ENCODE measurements at regions of chr4 and their contacts with region 1.

Region 1: DNA sequence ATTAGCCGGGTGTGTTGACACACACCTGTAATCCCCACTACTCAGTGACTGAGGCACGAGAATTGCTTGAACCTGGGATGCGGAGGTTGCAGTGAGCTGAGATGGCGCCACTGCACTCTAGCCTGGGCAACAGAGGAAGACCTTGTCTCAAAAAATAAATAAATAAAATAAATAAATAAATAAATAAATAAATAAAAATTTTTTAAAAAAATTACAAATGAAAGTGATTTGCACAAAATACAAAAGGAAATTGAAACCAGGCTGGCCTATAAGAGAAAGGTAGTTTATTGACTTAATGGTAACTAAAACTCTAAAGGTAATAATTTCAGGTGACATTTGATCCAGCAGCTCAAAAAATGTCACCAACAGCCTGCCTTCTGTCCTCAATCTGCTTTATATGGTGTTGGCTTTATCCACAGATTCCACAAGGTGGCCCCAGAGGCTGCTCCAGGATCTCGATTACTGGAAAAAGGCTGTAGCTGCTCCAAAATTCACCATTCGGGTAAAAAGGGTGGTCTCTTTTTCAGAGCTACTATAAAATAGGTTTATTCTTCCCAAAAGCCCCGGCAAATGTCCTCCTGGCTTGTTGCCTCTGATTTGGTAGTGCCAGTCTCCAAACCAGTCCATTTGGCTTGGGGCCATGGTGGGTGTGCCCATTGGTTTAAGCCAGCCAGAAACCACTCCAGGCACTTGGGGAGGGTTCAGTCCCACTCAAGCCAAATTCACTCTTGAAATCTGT is 61.4 kb upstream of the TRIM2 start:
- DNase-seq: peak; percentile 52 to 62
- H3K4me3 ChIP-seq: peak overlapping the region; percentile 29; the same call in 1 of the 2 replicates
- H3K27ac ChIP-seq: peak overlapping the region; percentile 82
- H3K4me1 ChIP-seq: peaks cover 31% of the 10 kb centered on the region
- H3K27me3 ChIP-seq: no peaks in the 10 kb centered on the region
- CTCF ChIP-seq: peak; percentile 82

Region 2: GRCh38 chr4:153189016-153189801 is 46.3 kb after region 1 on chr4:
- CTCF ChIA-PET with region 1: interaction called, 11 read pairs
- POLR2A ChIA-PET with region 1: no interaction called
- intact Hi-C with region 1: no loop called
- DNase-seq: no peak
- H3K4me3 ChIP-seq: no peak overlapping the region
- H3K27ac ChIP-seq: no peak overlapping the region
- H3K4me1 ChIP-seq: no peaks in the 10 kb centered on the region
- H3K27me3 ChIP-seq: no peaks in the 10 kb centered on the region
- CTCF ChIP-seq: no peak

Region 3: DNA sequence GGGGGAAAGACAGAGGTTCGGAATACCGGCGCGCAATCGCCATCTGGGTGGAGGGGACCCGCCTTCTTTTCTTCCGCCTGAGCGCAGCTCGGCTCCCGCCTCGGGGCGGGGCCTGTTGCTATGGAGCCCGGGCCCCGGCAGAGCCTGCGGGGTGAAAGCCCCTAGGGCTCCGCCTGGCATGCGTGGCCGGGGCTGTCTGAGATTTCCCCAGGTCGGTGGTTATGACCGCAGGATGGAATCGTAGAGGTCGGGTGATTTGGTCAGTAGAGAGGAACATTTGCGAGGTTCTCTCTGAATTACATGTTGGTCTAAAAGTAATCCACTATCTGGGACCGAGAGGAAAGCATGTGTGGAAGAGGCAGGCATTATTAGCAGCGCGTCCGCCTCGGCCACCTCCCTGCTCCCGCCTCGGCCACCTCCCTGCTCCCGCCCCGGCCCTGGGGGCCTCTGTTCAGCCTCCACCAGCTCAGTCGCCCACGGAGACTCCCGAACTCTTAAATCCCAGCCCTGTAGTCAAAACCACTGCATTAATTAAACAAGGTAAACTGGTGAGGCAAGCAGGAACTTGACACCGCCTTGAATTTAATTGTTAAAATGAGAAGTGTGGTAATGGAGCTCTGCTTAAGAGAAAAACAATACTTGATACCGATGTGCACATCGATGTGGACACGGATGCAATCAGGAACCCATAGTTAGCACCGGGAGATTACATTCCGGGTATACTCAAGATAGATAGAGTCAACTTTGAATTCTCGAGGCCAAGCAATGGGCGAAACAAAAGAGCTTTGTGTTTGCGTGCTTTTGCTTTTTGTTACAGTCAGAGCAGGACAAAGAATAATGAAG is 106.6 kb after region 1 on chr4:
- CTCF ChIA-PET with region 1: interaction called, 3 read pairs
- POLR2A ChIA-PET with region 1: interaction called, 3 read pairs
- intact Hi-C with region 1: loop called (anchors 1 kb)
- DNase-seq: peak; percentile 79 to 89
- H3K4me3 ChIP-seq: peak overlapping the region; percentile 70
- H3K27ac ChIP-seq: peak overlapping the region; percentile 66
- H3K4me1 ChIP-seq: peaks cover 25% of the 10 kb centered on the region
- H3K27me3 ChIP-seq: no peaks in the 10 kb centered on the region
- CTCF ChIP-seq: no peak

Region 4: GRCh38 chr4:153344131-153345010 is 201.5 kb after region 1 on chr4 and contains the start of gene MND1:
- CTCF ChIA-PET with region 1: interaction called, 4 read pairs
- POLR2A ChIA-PET with region 1: interaction called, 6 read pairs
- intact Hi-C with region 1: loop called (anchors 1 kb)
- DNase-seq: peak; percentile 38 to 88
- H3K4me3 ChIP-seq: peak within 1 kb of the TSS; percentile 92
- H3K27ac ChIP-seq: peak within 1 kb of the TSS; percentile 70
- H3K4me1 ChIP-seq: peaks cover 34% of the 10 kb centered on the region
- H3K27me3 ChIP-seq: no peaks in the 10 kb centered on the region
- CTCF ChIP-seq: peak; percentile 82
- total RNA-seq, gene MND1: 17.6 and 24.4 TPM in 2 replicates

Region 5: DNA sequence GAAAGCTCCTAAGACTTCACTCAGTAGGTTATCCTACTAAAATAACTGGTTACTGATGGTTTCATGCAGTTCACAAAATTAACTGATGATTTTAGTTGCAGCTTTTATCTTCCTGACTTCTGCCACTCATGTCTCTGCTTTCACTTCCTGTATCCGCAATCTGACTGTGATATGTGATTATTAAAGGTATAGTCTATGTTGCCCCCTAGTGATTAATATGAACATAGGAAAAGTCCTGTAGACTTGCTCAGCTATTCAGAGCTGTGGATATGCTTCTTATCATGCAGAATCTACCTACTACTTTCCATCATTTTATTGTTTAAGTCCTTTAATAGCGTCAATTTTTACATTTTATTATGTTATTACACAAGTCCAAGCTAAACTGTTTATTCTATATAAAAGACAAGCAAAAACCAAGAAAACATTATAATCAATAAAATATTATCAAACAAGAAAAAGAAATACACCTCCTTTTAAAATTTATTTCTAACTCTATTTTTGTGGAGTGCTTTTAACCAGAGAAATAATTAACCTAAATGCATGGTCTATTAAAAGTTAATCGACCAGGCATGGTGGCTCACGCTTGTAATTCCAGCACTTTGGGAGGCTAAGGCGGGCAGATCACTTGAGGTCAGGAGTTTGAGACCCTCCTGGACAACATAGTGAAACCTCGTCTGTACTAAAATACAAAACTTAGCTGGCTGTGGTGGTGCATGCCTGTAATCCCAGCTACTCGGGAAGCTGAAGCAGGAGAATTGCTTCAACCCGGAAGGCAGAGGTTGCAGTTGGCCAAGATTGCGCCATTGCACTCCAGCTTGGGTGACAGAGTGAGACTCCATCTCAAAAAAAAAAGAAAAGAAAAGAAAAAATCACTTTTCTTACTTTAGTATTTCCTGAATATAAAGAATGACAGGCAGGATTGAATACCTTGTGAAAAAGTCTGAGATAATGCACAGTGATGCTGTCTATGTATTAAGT is 500.8 kb after region 1 on chr4:
- CTCF ChIA-PET with region 1: interaction called, 3 read pairs
- POLR2A ChIA-PET with region 1: no interaction called
- intact Hi-C with region 1: loop called (anchors 5 kb)
- DNase-seq: peak in 1 of 2 experiments; percentile 47
- H3K4me3 ChIP-seq: no peak overlapping the region
- H3K27ac ChIP-seq: no peak overlapping the region
- H3K4me1 ChIP-seq: no peaks in the 10 kb centered on the region
- H3K27me3 ChIP-seq: no peaks in the 10 kb centered on the region
- CTCF ChIP-seq: peak; percentile 56; the same call in 1 of the 2 replicates

Measured in PC-9 (cell line).